ENCODE measurements at regions of chr4 and their contacts with region 1.

Region 1: DNA sequence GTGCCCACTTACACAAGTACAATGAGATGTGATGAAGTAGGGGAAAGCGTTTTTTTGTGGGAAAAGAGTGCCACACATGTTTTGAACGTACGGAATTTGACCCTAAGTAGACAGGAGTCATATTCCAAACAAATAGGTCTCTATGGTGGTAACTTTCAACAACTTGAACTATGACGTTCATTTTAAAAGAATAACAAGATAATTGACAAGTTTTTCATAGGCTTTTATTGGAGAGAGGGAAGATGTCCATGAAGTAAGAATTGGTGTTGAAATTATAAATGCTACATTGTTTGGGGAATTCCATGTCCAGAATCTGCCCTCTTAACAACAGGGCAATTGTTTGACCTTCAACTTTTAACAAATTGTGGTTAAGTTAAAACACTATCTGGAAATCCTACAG is 126.5 kb downstream of the GASK1B start:
- DNase-seq: peak; percentile 74
- ATAC-seq: peak; percentile 71; the same call in 2 of the 3 replicates
- H3K4me3 ChIP-seq: no peak overlapping the region; a peak in 1 of 6 replicates
- H3K27ac ChIP-seq: peak overlapping the region; percentile 27
- H3K4me1 ChIP-seq: peaks cover 19% of the 10 kb centered on the region
- H3K27me3 ChIP-seq: no peaks in the 10 kb centered on the region
- CTCF ChIP-seq: no peak
- EP300 ChIP-seq: peak in 1 of 2 experiments; percentile 18; a peak in 2 of 4 replicates
- POLR2A ChIP-seq: no peak
- RAD21 ChIP-seq: no peak

Region 2: DNA sequence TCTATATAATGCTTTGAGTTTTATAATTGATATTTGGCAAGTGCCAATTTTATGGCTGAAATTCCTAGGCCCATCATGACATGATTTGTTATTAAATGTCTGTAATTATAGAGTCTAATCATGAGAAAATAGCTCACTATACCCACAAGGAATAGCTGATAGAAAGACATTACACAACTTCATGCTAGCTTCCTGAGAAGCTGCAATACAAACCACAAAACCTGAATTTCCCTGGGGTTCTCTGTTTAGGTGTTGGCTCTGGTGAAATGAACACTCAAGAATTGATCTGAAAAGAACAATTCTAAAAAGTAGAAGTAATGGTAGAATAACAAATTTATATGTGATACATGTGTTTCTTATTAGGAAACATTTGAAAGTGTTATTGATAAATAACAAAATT is 43.1 kb before region 1 on chr4:
- CTCF ChIA-PET with region 1: no interaction called
- POLR2A ChIA-PET with region 1: no interaction called
- in situ Hi-C with region 1: no loop called
- intact Hi-C with region 1: loop called (anchors 2 kb)
- DNase-seq: no peak
- ATAC-seq: no peak
- H3K4me3 ChIP-seq: no peak overlapping the region
- H3K27ac ChIP-seq: no peak overlapping the region
- H3K4me1 ChIP-seq: peaks cover 25% of the 10 kb centered on the region
- H3K27me3 ChIP-seq: no peaks in the 10 kb centered on the region
- CTCF ChIP-seq: no peak
- EP300 ChIP-seq: no peak
- POLR2A ChIP-seq: no peak
- RAD21 ChIP-seq: no peak

Region 3: DNA sequence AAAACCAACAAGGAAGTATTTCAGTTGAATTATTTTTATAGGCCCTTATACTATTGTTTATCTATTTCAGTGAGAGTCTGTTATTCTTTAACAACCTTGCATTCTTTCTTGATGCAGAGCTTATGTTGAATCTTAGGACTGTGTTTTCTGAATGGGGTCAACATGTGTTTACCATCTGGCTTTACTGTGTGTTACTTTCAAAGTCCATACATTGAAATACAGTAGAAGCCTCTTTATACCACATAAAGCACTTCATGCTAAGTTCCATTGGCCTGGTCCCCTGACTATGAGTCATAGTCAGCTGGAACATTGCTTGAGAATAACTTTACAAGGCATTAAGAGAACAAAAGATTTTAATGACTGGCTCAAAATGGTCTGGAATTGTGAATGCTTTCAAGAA is 26.2 kb before region 1 on chr4:
- CTCF ChIA-PET with region 1: no interaction called
- POLR2A ChIA-PET with region 1: no interaction called
- in situ Hi-C with region 1: no loop called
- intact Hi-C with region 1: loop called (anchors 1 kb)
- DNase-seq: peak; percentile 92
- ATAC-seq: peak; percentile 100
- H3K4me3 ChIP-seq: no peak overlapping the region; a peak in 1 of 6 replicates
- H3K27ac ChIP-seq: peak overlapping the region; percentile 60
- H3K4me1 ChIP-seq: peaks cover 35% of the 10 kb centered on the region
- H3K27me3 ChIP-seq: no peaks in the 10 kb centered on the region
- CTCF ChIP-seq: no peak
- EP300 ChIP-seq: peak in 1 of 2 experiments; percentile 89; a peak in 2 of 4 replicates
- POLR2A ChIP-seq: no peak
- RAD21 ChIP-seq: no peak

Region 4: DNA sequence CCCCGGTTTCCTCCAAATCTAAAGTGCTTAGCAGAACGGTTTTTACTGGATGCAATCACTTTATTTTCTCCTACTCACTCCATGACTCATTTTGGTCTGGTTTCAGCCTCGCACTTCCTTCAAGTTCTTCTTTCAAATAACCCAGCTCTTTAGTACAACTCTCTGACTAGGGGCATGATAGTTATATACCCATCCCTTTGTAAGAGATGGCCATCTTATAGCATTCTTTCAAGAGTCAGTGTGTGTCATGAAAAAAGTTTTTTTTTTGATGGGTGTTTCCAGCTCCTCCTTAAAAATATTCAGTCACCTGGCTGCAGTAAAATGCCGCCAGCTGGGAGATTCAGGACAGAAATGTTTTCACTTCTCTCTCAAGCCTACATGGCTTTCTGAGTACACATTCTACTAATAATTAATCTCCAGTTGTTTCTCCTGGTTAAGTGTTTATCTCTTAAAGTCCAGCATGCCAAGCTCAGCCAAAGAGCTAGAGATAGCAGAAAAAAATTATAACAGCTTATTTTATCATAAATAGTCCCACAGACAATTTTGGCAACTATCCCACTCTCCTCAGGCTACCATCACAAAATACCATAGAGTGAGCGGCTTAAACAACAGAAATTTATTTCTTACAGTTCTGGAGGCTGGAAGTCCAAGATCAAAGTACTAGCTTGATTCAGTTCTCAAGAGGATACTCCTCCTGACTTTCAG is 12.8 kb before region 1 on chr4:
- CTCF ChIA-PET with region 1: no interaction called
- POLR2A ChIA-PET with region 1: no interaction called
- in situ Hi-C with region 1: no loop called
- intact Hi-C with region 1: loop called (anchors 1 kb)
- DNase-seq: peak; percentile 19
- ATAC-seq: peak; percentile 63
- H3K4me3 ChIP-seq: no peak overlapping the region
- H3K27ac ChIP-seq: peak overlapping the region; percentile 33
- H3K4me1 ChIP-seq: peaks cover 57% of the 10 kb centered on the region
- H3K27me3 ChIP-seq: no peaks in the 10 kb centered on the region
- CTCF ChIP-seq: no peak
- EP300 ChIP-seq: no peak
- POLR2A ChIP-seq: no peak
- RAD21 ChIP-seq: no peak

Measured in HepG2 (cell line).